Panc1 (cell line): ENCODE measurements at regions of chr10 and their contacts with region 1.

Region 1: GRCh38 chr10:123202511-123202910 is 48.3 kb downstream of the BUB3 start:
- DNase-seq: no peak
- ATAC-seq: 0 out of 2 replicates have a peak, but pooled peaks have one; percentile 36
- H3K4me3 ChIP-seq: no peak overlapping the region
- H3K27ac ChIP-seq: no peak overlapping the region
- H3K4me1 ChIP-seq: peaks cover 3% of the 10 kb centered on the region; the same call in 1 of the 2 replicates
- H3K27me3 ChIP-seq: no peaks in the 10 kb centered on the region
- CTCF ChIP-seq: no peak

Region 2: GRCh38 chr10:122980209-122981065 is 222.1 kb before region 1 on chr10 and contains the start of gene PSTK:
- CTCF ChIA-PET with region 1: no interaction called
- POLR2A ChIA-PET with region 1: interaction called, 16 read pairs
- in situ Hi-C with region 1: no loop called
- intact Hi-C with region 1: no loop called
- DNase-seq: peak; percentile 86
- ATAC-seq: peak; percentile 98
- H3K4me3 ChIP-seq: peak within 1 kb of the TSS; percentile 67 to 94
- H3K27ac ChIP-seq: peak within 1 kb of the TSS; percentile 91
- H3K4me1 ChIP-seq: peaks cover 9% of the 10 kb centered on the region
- H3K27me3 ChIP-seq: no peaks in the 10 kb centered on the region
- CTCF ChIP-seq: peak; percentile 96
- total RNA-seq, gene PSTK: 15.8 TPM